Activated B cell treated with CpG ODN at 0.5 μM for 24 hours (primary cell): ENCODE measurements at regions of chr13 and their contacts with region 1.

Region 1: GRCh38 chr13:107079423-107080049 is 511.6 kb upstream of the ARGLU1 start:
- DNase-seq: no peak
- ATAC-seq: no peak
- H3K4me3 Mint-ChIP-seq: no peak overlapping the region
- H3K27ac Mint-ChIP-seq: no peak overlapping the region
- H3K4me1 Mint-ChIP-seq: no peaks in the 10 kb centered on the region
- H3K27me3 Mint-ChIP-seq: no peaks in the 10 kb centered on the region
- CTCF ChIP-seq: no peak

Region 2: DNA sequence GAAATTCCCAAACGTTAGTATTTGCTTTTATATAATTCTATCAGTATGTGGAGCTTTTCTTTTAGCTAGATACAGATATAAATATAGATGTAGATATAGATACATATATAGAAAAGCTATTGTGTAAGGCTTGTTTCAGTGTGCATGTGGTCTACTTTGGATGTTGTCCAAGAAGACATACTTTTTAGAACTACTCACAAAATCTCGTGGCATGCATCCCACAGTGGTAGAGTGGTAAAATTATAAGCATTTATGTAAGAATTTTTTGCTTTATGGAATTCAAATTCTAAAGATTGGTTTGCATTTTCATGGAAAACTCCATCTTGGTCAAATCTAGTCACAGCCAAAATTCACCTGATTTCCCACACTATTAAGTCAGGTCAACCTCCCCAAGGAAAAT is 1424.5 kb before region 1 on chr13:
- CTCF ChIA-PET with region 1: no interaction called
- POLR2A ChIA-PET with region 1: no interaction called
- intact Hi-C with region 1: loop called (anchors 5 kb)
- DNase-seq: no peak
- ATAC-seq: no peak
- H3K4me3 Mint-ChIP-seq: no peak overlapping the region
- H3K27ac Mint-ChIP-seq: no peak overlapping the region
- H3K4me1 Mint-ChIP-seq: no peaks in the 10 kb centered on the region
- H3K27me3 Mint-ChIP-seq: no peaks in the 10 kb centered on the region
- CTCF ChIP-seq: no peak

Region 3: GRCh38 chr13:106738186-106738678 is 341.3 kb before region 1 on chr13:
- CTCF ChIA-PET with region 1: no interaction called
- POLR2A ChIA-PET with region 1: no interaction called
- intact Hi-C with region 1: no loop called
- DNase-seq: no peak
- ATAC-seq: no peak
- H3K4me3 Mint-ChIP-seq: no peak overlapping the region
- H3K27ac Mint-ChIP-seq: no peak overlapping the region
- H3K4me1 Mint-ChIP-seq: no peaks in the 10 kb centered on the region
- H3K27me3 Mint-ChIP-seq: no peaks in the 10 kb centered on the region
- CTCF ChIP-seq: no peak

Region 4: DNA sequence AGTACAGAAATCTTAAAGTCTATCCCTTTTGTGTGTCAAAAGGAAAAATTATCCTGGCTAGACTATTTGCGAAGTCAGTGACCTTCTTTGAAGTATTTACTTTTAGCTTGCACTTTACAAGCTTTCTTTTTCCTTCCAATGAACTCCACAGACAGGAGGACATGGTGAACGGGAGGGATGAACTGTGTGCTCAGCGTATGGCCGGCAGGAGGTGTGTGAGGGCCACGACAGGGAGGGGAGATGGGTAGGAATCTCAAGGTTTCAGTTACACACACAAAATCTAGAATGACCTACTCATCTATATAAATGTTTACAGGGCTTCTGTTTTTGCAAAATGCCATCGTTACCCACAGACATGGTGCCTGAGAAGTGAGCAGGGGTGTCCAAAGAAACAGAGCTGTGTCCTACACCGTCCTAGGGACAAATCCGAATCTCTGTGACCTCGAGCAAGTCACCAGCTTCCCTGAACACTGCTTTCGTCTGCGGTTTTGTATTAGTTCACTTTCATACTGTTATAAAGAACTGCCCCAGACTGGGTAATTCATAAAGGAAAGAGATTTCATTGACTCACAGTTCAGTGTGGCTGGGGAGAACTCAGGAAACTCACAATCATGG is 598.6 kb after region 1 on chr13:
- CTCF ChIA-PET with region 1: no interaction called
- POLR2A ChIA-PET with region 1: no interaction called
- intact Hi-C with region 1: no loop called
- DNase-seq: no peak
- ATAC-seq: no peak
- H3K4me3 Mint-ChIP-seq: no peak overlapping the region
- H3K27ac Mint-ChIP-seq: no peak overlapping the region
- H3K4me1 Mint-ChIP-seq: no peaks in the 10 kb centered on the region
- H3K27me3 Mint-ChIP-seq: no peaks in the 10 kb centered on the region
- CTCF ChIP-seq: no peak